CD4-positive, alpha-beta memory T cell (primary cell): ENCODE measurements at regions of chr3 and their contacts with region 1.

Region 1: GRCh38 chr3:143001369-143002082 is at the start of gene U2SURP:
- DNase-seq: peak; percentile 88 to 96 (median 92)
- H3K4me3 ChIP-seq: peak within 1 kb of the TSS; percentile 82 to 100
- H3K4me3 Mint-ChIP-seq: peak within 1 kb of the TSS; percentile 97 to 100 (median 99)
- H3K27ac ChIP-seq: peak within 1 kb of the TSS; percentile 95
- H3K27ac Mint-ChIP-seq: peak within 1 kb of the TSS; percentile 97 to 100 (median 100)
- H3K4me1 ChIP-seq: peaks cover 49% of the 10 kb centered on the region
- H3K4me1 Mint-ChIP-seq: peaks cover 28 to 57% (median 38%) of the 10 kb centered on the region in 4 donors
- H3K27me3 ChIP-seq: no peaks in the 10 kb centered on the region
- H3K27me3 Mint-ChIP-seq: peaks cover 0 to 2% of the 10 kb centered on the region in 2 donors
- total RNA-seq, gene U2SURP: 137 TPM

Region 2: GRCh38 chr3:141875374-141875892 is 1126.1 kb before region 1 on chr3:
- CTCF ChIA-PET with region 1: no interaction called
- POLR2A ChIA-PET with region 1: interaction called, 3 read pairs
- intact Hi-C with region 1: loop called (anchors 5 kb)
- DNase-seq: peak; percentile 75 to 84 (median 78)
- H3K4me3 ChIP-seq: peak overlapping the region; percentile 82 to 86
- H3K4me3 Mint-ChIP-seq: peak overlapping the region; percentile 85 to 96 (median 92)
- H3K27ac ChIP-seq: peak overlapping the region; percentile 95
- H3K27ac Mint-ChIP-seq: peak overlapping the region; percentile 93 to 99 (median 95)
- H3K4me1 ChIP-seq: peaks cover 28% of the 10 kb centered on the region
- H3K4me1 Mint-ChIP-seq: peaks cover 19 to 39% (median 30%) of the 10 kb centered on the region in 4 donors
- H3K27me3 ChIP-seq: no peaks in the 10 kb centered on the region
- H3K27me3 Mint-ChIP-seq: peaks cover 0 to 1% of the 10 kb centered on the region in 2 donors

Region 3: DNA sequence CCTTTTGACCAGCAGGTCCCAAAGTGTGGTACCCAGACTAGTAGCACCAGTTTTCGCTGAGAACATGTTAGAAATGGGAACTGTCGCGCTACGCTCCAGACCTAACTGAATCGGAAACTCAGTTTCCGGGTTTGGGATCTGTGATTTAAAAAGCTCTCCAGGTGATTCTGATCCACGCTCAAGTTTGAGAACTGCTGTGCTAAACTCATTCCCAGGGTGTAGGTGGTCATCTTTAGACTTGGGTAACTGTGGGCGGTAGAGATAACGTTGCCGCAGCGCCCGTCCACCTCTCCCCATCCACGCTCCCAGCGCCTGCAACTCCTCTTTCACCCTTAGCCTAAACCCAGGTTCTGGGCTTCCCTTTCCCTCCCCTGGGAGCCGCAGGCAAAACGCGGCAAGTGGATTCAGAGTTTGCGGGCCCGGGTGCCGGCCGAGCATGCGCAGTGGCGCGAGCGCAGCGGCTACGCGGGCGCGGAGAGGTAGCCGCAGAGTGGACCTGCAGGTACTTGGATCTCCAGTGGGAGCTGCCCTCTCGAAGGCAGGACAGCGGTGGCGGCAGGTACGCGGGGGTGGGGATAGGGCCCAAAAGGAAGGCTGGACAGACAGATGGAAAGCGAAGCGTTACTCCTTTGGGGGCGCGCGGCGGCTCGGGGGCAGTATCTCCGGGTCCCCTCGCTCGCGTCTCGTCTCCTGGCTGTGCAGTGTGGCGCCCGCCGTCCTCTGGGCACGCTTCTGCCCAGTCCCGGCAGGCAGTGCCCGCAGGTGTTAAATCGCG is 405.4 kb before region 1 on chr3 and contains the start of gene PLS1:
- CTCF ChIA-PET with region 1: interaction called, 3 read pairs
- POLR2A ChIA-PET with region 1: interaction called, 18 read pairs
- intact Hi-C with region 1: loop called (anchors 1 kb)
- DNase-seq: peak; percentile 82 to 89 (median 85)
- H3K4me3 ChIP-seq: peak within 1 kb of the TSS; percentile 91 to 93
- H3K4me3 Mint-ChIP-seq: peak within 1 kb of the TSS; percentile 97 to 99 (median 98)
- H3K27ac ChIP-seq: peak within 1 kb of the TSS; percentile 36
- H3K27ac Mint-ChIP-seq: peak within 1 kb of the TSS; percentile 65 to 97 (median 96)
- H3K4me1 ChIP-seq: peaks cover 15% of the 10 kb centered on the region
- H3K4me1 Mint-ChIP-seq: peaks cover 7 to 22% (median 15%) of the 10 kb centered on the region in 4 donors
- H3K27me3 ChIP-seq: no peaks in the 10 kb centered on the region
- H3K27me3 Mint-ChIP-seq: peaks cover 1 to 2% of the 10 kb centered on the region in 2 donors
- total RNA-seq, gene PLS1: 2.7 to 3.1 TPM

Region 4: GRCh38 chr3:142716102-142716501 is 285.4 kb before region 1 on chr3:
- CTCF ChIA-PET with region 1: no interaction called
- POLR2A ChIA-PET with region 1: no interaction called
- intact Hi-C with region 1: no loop called
- DNase-seq: no peak
- H3K4me3 ChIP-seq: no peak overlapping the region
- H3K4me3 Mint-ChIP-seq: no peak overlapping the region
- H3K27ac ChIP-seq: no peak overlapping the region
- H3K27ac Mint-ChIP-seq: no peak overlapping the region
- H3K4me1 ChIP-seq: no peaks in the 10 kb centered on the region
- H3K4me1 Mint-ChIP-seq: no peaks in the 10 kb centered on the region
- H3K27me3 ChIP-seq: no peaks in the 10 kb centered on the region
- H3K27me3 Mint-ChIP-seq: peaks cover 19 to 37% of the 10 kb centered on the region in 2 donors

Region 5: GRCh38 chr3:143016321-143016972 is 14.9 kb after region 1 on chr3:
- CTCF ChIA-PET with region 1: interaction called, 11 read pairs
- POLR2A ChIA-PET with region 1: interaction called, 20 read pairs
- intact Hi-C with region 1: no loop called
- DNase-seq: peak in 4 of 5 donors; percentile 18 to 40 (median 26)
- H3K4me3 ChIP-seq: no peak overlapping the region
- H3K4me3 Mint-ChIP-seq: no peak overlapping the region
- H3K27ac ChIP-seq: no peak overlapping the region
- H3K27ac Mint-ChIP-seq: peak overlapping the region in 2 of 7 donors; percentile 6 to 42
- H3K4me1 ChIP-seq: no peaks in the 10 kb centered on the region
- H3K4me1 Mint-ChIP-seq: peaks cover 7 to 22% (median 14%) of the 10 kb centered on the region in 4 donors
- H3K27me3 ChIP-seq: no peaks in the 10 kb centered on the region
- H3K27me3 Mint-ChIP-seq: no peaks in the 10 kb centered on the region

Region 6: GRCh38 chr3:143433787-143434378 is 432.4 kb after region 1 on chr3:
- CTCF ChIA-PET with region 1: no interaction called
- POLR2A ChIA-PET with region 1: no interaction called
- intact Hi-C with region 1: no loop called
- DNase-seq: peak in 1 of 5 donors; percentile 3
- H3K4me3 ChIP-seq: no peak overlapping the region
- H3K4me3 Mint-ChIP-seq: no peak overlapping the region
- H3K27ac ChIP-seq: no peak overlapping the region
- H3K27ac Mint-ChIP-seq: no peak overlapping the region
- H3K4me1 ChIP-seq: no peaks in the 10 kb centered on the region
- H3K4me1 Mint-ChIP-seq: peaks cover 0 to 5% (median 2%) of the 10 kb centered on the region in 4 donors
- H3K27me3 ChIP-seq: no peaks in the 10 kb centered on the region
- H3K27me3 Mint-ChIP-seq: no peaks in the 10 kb centered on the region